GM12878 (cell line): ENCODE measurements at regions of chr5 and their contacts with region 1.

Region 1: DNA sequence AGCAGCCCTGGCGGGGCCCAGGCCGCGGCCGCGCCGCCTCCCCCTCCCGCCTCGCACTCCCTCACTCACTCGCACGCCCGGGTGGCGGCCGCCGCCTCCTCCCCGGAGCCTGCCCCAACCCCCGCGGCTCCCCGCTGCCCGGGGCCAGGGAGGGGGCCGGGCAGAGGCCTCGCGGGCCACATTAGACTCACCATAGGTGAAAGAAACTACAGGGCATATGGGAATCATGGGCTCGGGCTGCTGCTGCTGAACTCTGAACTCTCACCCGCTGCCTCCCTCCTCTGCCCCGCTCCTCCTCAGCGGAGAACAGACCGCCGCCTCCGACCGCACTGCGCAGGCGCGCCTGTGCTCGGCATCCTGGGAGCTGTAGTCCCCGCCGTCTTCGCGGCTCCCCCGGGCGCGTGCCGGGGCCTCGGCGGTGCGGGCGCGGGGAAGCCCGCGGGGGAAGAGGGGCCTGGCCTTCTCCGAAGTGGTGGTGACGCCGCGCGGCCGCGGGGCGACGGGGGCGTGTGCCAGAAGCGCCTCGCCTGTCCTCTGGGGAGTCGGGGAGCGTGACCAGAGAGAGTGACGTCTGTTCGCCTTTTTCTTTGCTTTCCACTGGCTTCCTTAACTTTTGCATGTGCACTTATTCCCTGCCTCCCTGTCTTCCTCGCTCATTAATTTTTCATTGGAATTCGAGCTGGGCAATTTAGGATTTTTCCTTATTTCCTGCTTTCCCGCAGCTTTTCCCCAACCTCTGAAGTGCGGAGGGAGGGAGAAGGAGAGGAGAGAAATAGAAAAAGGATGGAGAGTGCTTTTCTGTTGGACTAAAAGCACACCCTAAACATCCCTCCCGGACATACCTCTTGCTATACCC is at the start of gene ZFR:
- DNase-seq: peak; percentile 60
- ATAC-seq: peak; percentile 90
- H3K4me3 ChIP-seq: peak within 1 kb of the TSS; percentile 82
- H3K27ac ChIP-seq: peak within 1 kb of the TSS; percentile 86
- H3K4me1 ChIP-seq: peaks cover 14% of the 10 kb centered on the region
- H3K27me3 ChIP-seq: no peaks in the 10 kb centered on the region; a peak in 1 of 4 replicates
- CTCF ChIP-seq: no peak
- EP300 ChIP-seq: no peak
- POLR2A ChIP-seq: peak; percentile 84
- RAD21 ChIP-seq: no peak
- polyA plus RNA-seq, gene ZFR: 33.7 to 37.1 TPM

Region 2: GRCh38 chr5:32360906-32361305 is 83.8 kb before region 1 on chr5:
- CTCF ChIA-PET with region 1: no interaction called
- POLR2A ChIA-PET with region 1: no interaction called
- RAD21 ChIA-PET with region 1: no interaction called
- SMC1A ChIA-PET with region 1: no interaction called
- in situ Hi-C with region 1: no loop called
- intact Hi-C with region 1: no loop called
- DNase-seq: no peak
- ATAC-seq: no peak
- H3K4me3 ChIP-seq: no peak overlapping the region
- H3K27ac ChIP-seq: no peak overlapping the region
- H3K4me1 ChIP-seq: no peaks in the 10 kb centered on the region
- H3K27me3 ChIP-seq: no peaks in the 10 kb centered on the region
- CTCF ChIP-seq: no peak
- EP300 ChIP-seq: no peak
- POLR2A ChIP-seq: no peak
- RAD21 ChIP-seq: no peak

Region 3: DNA sequence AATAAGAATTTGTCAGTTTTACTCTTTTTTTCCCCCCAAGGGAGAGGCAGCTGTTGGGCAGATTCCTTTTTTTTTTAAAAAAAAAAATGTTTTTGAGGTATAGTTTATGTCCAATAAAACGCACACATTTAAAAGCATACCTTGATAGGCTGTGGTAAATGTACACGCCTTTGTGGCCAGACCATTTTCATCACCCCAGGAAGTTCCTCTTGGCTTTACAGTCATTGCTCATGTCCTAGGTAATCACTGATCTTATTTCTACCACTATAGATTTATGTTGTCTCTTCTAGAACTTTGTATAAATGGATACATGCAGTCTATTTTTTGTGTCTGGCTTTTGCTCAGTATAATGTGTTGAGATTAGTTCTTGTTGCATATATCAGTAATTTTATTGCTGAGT is 150.5 kb after region 1 on chr5:
- CTCF ChIA-PET with region 1: interaction called, 5 read pairs
- POLR2A ChIA-PET with region 1: interaction called, 4 read pairs
- RAD21 ChIA-PET with region 1: interaction called, 8 read pairs
- SMC1A ChIA-PET with region 1: no interaction called
- in situ Hi-C with region 1: no loop called
- intact Hi-C with region 1: loop called (anchors 5 kb)
- DNase-seq: no peak
- ATAC-seq: peak; percentile 46
- H3K4me3 ChIP-seq: peak overlapping the region; percentile 29; the same call in 1 of the 2 replicates
- H3K27ac ChIP-seq: no peak overlapping the region
- H3K4me1 ChIP-seq: no peaks in the 10 kb centered on the region; the same call in none of the 2 replicates
- H3K27me3 ChIP-seq: no peaks in the 10 kb centered on the region
- CTCF ChIP-seq: no peak
- EP300 ChIP-seq: no peak
- POLR2A ChIP-seq: no peak
- RAD21 ChIP-seq: no peak